GM18951 (cell line): ENCODE measurements at regions of chr13 and their contacts with region 1.

Region 1: DNA sequence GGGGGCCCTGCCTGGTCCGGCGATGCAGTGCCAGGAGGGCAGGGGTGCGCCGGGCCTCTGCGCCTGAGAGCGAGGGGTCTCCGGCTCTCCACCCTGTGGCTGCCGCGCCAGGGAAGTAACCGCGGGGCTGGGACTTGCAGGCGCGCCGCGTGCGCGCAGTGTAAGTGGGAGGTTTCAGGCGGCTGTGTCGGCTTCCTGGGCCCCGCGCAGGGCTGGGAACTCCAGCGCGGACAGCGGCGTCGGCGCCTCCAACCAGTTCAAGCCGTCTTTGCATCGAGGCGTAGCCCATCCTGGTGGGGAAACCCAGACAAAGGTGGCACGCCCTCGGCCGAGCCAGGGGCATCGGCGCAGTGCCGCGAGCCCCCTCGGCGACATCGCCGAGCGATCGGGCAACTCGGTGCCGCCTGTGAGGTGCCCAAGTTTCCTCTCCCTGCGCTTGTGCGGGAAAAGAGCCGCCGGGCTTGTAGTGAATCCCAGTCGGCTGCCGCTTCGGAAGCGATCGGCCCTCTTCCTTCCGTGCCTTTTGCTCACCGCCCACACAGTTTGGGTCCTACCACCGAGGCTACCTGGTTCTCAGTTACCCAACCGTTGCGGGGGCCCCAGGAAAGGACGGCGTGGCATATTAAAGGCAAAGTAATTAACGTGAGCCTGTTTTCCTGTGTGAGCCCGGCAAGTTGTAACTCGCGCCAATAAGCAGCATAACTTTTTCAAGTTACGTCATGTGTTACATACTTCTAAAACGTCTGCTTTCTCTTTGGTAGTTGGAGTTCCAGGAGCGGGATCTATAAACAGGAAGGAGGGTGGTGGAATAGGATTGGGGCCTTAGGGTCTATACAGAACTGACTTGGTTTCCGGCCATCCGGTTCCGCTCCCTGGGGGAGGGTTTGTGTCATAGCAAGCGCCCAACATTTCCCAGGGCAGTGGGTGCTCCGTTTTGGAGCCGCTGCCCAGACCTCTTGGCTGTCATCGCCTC is 1.2 kb downstream of the LRCH1 start:
- POLR2A ChIP-seq: peak; percentile 54

Region 2: DNA sequence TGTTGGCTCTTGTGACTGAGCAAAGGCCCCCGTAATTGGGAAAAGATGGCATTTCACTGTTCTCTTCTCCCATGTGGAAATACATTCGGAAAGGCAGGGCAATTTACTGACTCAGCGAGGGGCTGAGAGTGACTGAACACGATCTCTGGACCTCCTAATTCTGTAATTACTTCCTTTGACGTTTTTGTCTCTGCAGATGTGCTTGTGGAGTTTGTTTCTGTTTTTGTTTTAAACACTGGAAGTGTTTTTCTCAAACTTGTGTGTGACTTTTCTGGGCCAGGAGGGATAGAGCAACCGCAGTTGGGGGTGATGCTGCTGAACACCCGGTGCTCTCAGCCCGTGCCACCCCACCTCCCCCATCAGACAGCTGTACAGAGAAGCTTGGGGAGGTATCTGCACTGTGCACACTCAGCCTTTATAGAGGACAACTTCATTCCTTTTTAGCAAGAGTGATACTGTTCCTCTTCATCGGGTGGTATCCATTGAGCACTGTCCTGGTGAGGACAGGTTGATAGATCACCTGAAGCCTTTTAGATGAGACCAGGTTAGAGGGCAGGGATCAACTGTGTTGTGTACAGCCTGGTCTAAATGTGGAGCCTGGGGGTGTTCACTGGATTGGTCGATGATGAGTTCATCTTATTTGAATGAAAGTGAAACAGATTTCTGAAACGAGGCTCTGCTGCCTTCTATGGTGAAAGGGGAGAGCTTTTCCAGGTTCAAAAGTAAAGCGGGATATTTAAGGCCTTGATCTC is 125.4 kb after region 1 on chr13:
- in situ Hi-C with region 1: loop called (anchors 10 kb)
- POLR2A ChIP-seq: peak; percentile 19